PC-3 (cell line): ENCODE measurements at regions of chr2 and their contacts with region 1.

Region 1: DNA sequence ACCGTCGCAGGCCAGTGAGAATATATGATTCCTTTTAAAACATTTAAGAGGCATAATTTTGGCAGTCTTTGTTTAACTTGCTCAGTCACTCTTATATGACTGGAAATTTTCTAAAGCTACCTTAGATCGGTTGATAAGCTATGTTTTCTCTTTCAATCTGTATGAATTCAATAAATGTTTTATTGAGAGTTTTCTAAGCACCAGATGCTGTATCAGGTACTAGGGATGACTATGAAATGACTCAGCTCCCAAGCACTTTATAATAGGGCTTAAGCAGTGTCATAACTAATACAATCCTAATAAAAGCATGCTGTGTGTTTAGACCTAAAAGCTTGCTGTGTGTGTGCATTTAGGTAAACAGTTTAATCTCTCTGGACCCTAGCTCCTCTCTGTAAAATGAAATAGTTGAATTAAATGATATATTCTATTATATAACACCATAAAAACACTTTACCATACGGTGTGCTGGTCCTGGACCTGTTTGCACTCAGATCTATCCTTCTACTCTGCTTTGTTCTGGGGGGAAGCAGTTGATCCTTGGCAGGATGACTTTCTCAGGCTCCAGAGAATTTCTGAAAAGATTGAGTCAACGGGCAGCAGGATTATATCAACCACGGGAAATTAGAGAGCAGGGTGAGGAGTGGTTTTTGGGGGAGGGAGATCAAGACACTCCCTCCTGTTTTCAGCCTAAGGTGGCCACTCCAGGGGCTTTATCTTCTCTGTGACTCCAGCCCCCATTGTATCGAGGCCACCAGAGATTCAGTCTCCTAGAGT is 26.1 kb upstream of the SLC38A11 start:
- DNase-seq: peak; percentile 90
- ATAC-seq: peak; percentile 82
- H3K4me3 ChIP-seq: peak overlapping the region; percentile 36; the same call in 1 of the 2 replicates
- H3K27ac ChIP-seq: peak overlapping the region; percentile 94
- H3K4me1 ChIP-seq: peaks cover 42% of the 10 kb centered on the region
- H3K27me3 ChIP-seq: no peaks in the 10 kb centered on the region
- CTCF ChIP-seq: no peak

Region 2: DNA sequence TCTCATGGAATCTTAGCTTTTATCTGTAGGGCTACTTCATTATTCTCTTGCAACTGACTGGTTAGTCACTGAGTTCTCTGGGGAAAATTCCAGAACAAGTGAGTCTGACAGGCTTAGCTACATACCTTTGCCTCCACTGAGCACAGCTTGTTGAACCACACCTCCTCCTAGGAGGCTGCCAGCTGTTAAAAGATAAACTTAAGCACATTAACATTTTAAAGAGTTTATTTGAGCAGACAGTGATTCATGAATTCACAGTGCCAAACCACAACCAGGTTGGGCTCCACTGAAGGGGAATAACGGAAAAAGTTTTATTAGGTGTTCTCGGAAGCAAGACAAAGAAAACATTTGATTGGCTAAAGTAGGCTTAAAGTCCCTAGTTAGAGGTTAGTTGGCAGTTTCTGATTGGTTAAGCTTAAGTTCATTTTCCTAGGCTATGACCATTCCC is 13.6 kb before region 1 on chr2:
- CTCF ChIA-PET with region 1: no interaction called
- POLR2A ChIA-PET with region 1: no interaction called
- intact Hi-C with region 1: loop called (anchors 1 kb)
- DNase-seq: peak; percentile 96
- ATAC-seq: peak; percentile 98
- H3K4me3 ChIP-seq: no peak overlapping the region
- H3K27ac ChIP-seq: peak overlapping the region; percentile 80
- H3K4me1 ChIP-seq: peaks cover 22% of the 10 kb centered on the region
- H3K27me3 ChIP-seq: no peaks in the 10 kb centered on the region
- CTCF ChIP-seq: no peak